Colonic mucosa (tissue), 4 donors: ENCODE measurements at regions of chr1 and their contacts with region 1.

Region 1: GRCh38 chr1:155989242-155990004 is 11.1 kb upstream of the ARHGEF2 start:
- DNase-seq: peak; percentile 72
- H3K4me3 ChIP-seq: peak overlapping the region; percentile 17
- H3K27ac ChIP-seq: peak overlapping the region; percentile 13
- H3K4me1 ChIP-seq: peaks cover 3% of the 10 kb centered on the region
- H3K27me3 ChIP-seq: no peaks in the 10 kb centered on the region
- CTCF ChIP-seq: peak; percentile 99

Region 2: DNA sequence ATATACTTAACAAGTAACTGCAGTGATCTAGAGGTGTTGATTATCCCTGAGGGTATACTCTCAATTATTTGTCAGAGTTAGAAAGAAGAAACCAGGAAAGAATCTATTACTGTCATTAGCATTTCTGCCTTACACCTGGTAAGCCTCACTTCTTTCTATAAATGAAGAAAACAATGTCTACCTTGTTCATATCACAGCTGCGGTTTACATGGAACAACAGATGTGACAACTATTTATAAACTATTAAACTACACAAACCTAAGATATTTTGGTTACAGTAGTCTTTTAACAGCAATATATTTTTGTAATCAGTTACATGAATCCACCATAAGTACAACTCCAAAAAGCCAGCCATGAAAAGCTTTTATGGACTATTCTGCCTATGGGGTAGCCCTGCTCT is 173.1 kb before region 1 on chr1:
- intact Hi-C with region 1: no loop called
- DNase-seq: no peak
- H3K4me3 ChIP-seq: no peak overlapping the region
- H3K27ac ChIP-seq: no peak overlapping the region
- H3K4me1 ChIP-seq: no peaks in the 10 kb centered on the region
- H3K27me3 ChIP-seq: no peaks in the 10 kb centered on the region
- CTCF ChIP-seq: no peak

Region 3: GRCh38 chr1:155934097-155934935 is 55.1 kb before region 1 on chr1 and contains the start of gene KHDC4:
- intact Hi-C with region 1: loop called (anchors 2 kb)
- DNase-seq: peak; percentile 97
- H3K4me3 ChIP-seq: peak within 1 kb of the TSS; percentile 77
- H3K27ac ChIP-seq: peak within 1 kb of the TSS; percentile 89
- H3K4me1 ChIP-seq: peaks cover 18% of the 10 kb centered on the region
- H3K27me3 ChIP-seq: no peaks in the 10 kb centered on the region
- CTCF ChIP-seq: no peak
- total RNA-seq, gene KHDC4: 42.5 to 56.0 TPM

Region 4: DNA sequence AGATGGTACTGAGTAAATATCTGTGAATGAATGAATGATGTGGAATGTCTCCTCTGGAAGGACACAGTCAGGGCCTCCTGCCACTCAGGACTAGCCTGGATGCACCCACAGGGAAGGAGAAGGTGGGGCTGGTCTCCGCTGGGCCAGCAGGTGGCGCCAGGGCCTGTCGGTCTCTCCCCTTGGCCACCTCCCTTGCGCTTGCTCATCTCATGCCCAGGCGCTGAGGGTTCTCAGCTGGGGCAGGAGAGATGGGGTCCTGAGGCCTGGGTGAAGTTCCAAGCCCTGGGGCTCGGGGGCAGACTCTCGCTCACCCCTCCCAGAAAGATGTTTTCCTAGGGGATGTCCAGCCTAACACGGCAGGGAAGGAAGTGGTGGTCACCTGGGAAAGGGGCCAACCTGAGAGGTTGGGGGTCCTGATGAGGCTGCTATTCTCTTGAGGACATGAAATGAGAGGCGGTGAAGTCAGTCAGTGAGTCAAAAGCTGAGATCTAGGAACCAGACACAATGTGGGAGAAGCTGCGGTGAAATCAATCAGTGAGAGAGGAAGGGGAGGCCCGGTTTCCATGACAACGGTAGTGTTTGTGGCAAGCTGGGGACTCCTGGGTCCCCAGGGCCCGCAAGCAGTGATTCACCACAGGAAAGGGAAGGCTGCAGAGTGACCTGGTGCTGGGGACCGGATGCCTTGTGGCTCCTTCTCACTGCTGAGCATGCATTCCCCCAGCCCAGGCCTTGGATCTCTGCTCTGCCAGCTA is 107.4 kb after region 1 on chr1:
- intact Hi-C with region 1: no loop called
- DNase-seq: peak; percentile 95
- H3K4me3 ChIP-seq: no peak overlapping the region
- H3K27ac ChIP-seq: peak overlapping the region; percentile 48
- H3K4me1 ChIP-seq: peaks cover 8% of the 10 kb centered on the region
- H3K27me3 ChIP-seq: no peaks in the 10 kb centered on the region
- CTCF ChIP-seq: peak; percentile 89